ENCODE measurements at regions of chr3 and their contacts with region 1.

Region 1: GRCh38 chr3:169998568-169999131 is 32.0 kb downstream of the SEC62 start:
- DNase-seq: peak; percentile 14
- H3K4me3 Mint-ChIP-seq: no peak overlapping the region
- H3K27ac Mint-ChIP-seq: peak overlapping the region; percentile 83
- H3K4me1 Mint-ChIP-seq: peaks cover 36% of the 10 kb centered on the region
- H3K27me3 Mint-ChIP-seq: no peaks in the 10 kb centered on the region

Region 2: GRCh38 chr3:169772897-169773828 is 225.5 kb before region 1 on chr3 and contains the start of gene MYNN:
- CTCF ChIA-PET with region 1: no interaction called
- POLR2A ChIA-PET with region 1: no interaction called
- intact Hi-C with region 1: loop called (anchors 1 kb)
- DNase-seq: peak; percentile 95
- H3K4me3 Mint-ChIP-seq: peak within 1 kb of the TSS; percentile 96
- H3K27ac Mint-ChIP-seq: peak within 1 kb of the TSS; percentile 97
- H3K4me1 Mint-ChIP-seq: peaks cover 39% of the 10 kb centered on the region
- H3K27me3 Mint-ChIP-seq: no peaks in the 10 kb centered on the region
- total RNA-seq, gene MYNN: 12.8 to 14.0 TPM

Region 3: DNA sequence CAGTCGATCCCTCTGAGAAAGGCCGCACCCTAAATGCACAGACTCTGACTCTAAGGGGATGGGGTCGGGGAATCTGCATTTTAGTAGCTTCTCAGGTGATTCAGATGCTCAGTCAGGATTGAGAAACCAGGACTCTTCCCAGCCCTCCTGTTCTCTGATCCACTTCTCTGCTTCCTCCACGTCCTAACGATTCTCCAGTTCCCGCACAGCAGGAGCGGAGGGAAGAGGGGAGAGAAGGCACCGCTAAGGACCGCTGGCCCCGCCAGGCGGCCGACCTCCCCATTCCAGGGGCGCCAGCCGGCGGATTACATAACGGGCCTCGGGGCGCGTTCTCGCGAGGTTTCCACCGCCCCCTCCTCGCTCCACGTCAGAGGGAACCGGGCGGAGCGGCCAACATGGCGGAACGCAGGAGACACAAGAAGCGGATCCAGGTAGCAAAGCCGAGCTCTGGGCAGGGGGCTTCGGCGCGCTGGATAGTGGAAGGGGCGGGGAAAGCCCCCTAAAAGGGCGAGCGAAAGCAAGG is 32.2 kb before region 1 on chr3 and contains the start of gene SEC62:
- CTCF ChIA-PET with region 1: interaction called, 3 read pairs
- POLR2A ChIA-PET with region 1: interaction called, 3 read pairs
- intact Hi-C with region 1: loop called (anchors 1 kb)
- DNase-seq: peak; percentile 97
- H3K4me3 Mint-ChIP-seq: peak within 1 kb of the TSS; percentile 80
- H3K27ac Mint-ChIP-seq: peak within 1 kb of the TSS; percentile 96
- H3K4me1 Mint-ChIP-seq: peaks cover 59% of the 10 kb centered on the region
- H3K27me3 Mint-ChIP-seq: no peaks in the 10 kb centered on the region
- total RNA-seq, gene SEC62: 59.7 to 60.7 TPM

Region 4: DNA sequence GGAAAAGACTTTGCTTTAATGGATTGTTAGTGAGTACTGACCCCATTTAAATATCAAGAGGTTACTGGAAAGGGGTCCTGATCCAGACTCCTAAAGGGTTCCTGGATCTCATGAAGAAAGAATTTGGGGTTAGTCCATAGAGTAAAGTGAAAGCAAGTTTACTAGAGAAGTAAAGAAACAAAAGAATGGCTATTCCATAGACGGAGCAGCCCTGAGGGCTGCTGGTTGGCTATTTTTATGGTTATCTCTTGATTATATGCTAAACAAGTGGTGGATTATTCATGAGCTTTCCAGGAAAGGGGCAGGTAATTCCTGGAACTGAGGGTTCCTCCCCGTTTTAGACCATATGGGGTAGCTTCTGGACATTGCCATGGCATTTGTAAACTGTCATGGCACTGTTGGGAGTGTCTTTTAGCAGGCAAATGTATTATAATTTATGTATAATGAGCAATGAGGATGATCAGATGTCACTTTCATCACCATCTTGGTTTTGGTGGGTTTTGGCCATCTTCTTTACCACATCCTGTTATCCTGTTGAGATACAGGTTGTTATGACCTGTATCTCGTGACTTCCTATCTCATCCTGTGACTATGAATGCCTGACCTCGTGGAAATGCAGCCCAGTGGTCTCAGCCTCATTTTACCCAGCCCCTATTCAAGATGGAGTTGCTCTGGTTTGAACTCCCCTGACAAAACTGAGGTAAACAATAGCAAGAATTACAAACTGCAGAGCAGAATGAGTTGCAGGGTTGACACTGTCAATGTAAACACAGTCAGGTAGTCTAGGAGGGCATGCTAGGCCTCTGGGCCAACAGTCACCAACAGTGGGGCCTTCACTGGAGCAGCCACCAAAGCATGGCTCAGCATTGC is 28.8 kb after region 1 on chr3:
- CTCF ChIA-PET with region 1: no interaction called
- POLR2A ChIA-PET with region 1: no interaction called
- intact Hi-C with region 1: loop called (anchors 2 kb)
- DNase-seq: peak; percentile 59
- H3K4me3 Mint-ChIP-seq: no peak overlapping the region
- H3K27ac Mint-ChIP-seq: peak overlapping the region; percentile 72
- H3K4me1 Mint-ChIP-seq: peaks cover 23% of the 10 kb centered on the region
- H3K27me3 Mint-ChIP-seq: no peaks in the 10 kb centered on the region

Region 5: DNA sequence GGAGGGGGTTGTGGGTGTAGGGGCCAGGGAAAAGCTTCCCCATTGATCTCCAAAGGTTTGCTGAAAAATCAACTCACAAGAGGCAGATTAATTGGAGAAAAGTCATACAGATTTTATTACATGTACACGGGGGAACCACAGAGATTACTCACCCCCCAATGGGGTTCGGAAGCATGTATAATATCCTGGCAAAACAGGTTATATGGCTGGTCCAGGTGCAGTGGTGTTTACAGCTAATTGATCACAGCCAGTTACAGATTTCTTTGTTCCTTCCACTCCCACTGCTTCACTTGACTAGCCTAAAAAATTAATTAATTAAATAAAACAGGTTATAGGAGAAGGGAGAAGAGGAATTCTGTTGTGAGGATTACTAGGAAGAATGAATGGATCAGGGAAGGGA is 245.9 kb after region 1 on chr3:
- CTCF ChIA-PET with region 1: no interaction called
- POLR2A ChIA-PET with region 1: no interaction called
- intact Hi-C with region 1: no loop called
- DNase-seq: no peak
- H3K4me3 Mint-ChIP-seq: no peak overlapping the region
- H3K27ac Mint-ChIP-seq: no peak overlapping the region
- H3K4me1 Mint-ChIP-seq: peaks cover 16% of the 10 kb centered on the region
- H3K27me3 Mint-ChIP-seq: no peaks in the 10 kb centered on the region

Region 6: GRCh38 chr3:170542704-170543103 is 544.1 kb after region 1 on chr3:
- CTCF ChIA-PET with region 1: no interaction called
- POLR2A ChIA-PET with region 1: no interaction called
- intact Hi-C with region 1: no loop called
- DNase-seq: no peak
- H3K4me3 Mint-ChIP-seq: no peak overlapping the region
- H3K27ac Mint-ChIP-seq: no peak overlapping the region
- H3K4me1 Mint-ChIP-seq: no peaks in the 10 kb centered on the region
- H3K27me3 Mint-ChIP-seq: peaks cover 16% of the 10 kb centered on the region

Measured in activated CD4-positive, alpha-beta memory T cell treated with anti-CD3 and anti-CD28 coated beads for 36 hours (primary cell).